Naive thymus-derived CD4-positive, alpha-beta T cell (primary cell): ENCODE measurements at regions of chr5 and their contacts with region 1.

Region 1: DNA sequence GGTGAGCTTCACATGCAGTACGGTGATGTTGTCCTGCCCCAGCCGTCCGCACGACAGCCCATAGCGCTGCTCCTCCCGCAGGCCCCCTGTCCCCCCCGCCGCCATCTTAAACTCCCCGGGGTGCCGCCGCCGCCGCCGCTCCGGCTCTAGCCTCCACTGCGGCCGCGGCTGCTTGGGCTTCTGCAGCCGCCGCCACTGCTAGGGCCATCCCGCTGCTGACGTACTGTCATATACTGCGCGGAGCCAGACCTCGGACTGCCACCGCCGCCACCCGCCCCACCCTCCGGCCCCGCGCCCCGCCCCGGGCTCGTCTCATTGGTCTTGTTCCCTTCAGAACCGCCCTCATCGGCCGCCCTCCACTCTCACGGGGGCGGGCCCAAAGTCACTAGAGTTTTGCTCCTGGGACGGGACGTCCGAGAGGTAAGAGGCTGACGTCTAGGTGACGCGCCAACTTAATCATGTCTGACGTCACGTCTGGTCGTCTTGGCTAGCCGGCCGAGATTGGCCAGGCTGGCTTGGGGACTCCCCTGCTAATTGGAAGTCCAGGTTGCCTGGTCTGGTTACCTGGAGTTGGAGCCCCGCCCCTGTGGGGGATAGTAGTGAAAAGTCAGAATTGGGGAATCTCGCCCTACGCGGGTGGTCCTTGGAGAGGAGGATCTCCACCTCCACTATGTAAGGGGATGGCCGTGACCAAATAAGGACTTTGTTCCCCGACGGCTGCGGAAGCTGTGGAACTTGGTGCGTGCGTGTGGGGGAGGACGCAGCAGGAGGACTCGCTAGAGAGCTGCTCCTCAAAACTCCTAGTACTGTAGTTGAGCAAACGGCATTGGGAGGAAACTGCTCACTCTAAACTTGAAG is at the start of gene ELL2:
- DNase-seq: peak; percentile 85 to 98 (median 90)
- ATAC-seq: peak; percentile 93
- H3K4me3 ChIP-seq: peak within 1 kb of the TSS; percentile 73
- H3K4me3 Mint-ChIP-seq: peak within 1 kb of the TSS; percentile 94 to 99 (median 96)
- H3K27ac ChIP-seq: peak within 1 kb of the TSS; percentile 90
- H3K27ac Mint-ChIP-seq: peak within 1 kb of the TSS; percentile 87 to 99 (median 98)
- H3K4me1 ChIP-seq: peaks cover 12 to 13% of the 10 kb centered on the region in 2 donors
- H3K4me1 Mint-ChIP-seq: peaks cover 30 to 43% (median 34%) of the 10 kb centered on the region in 7 donors
- H3K27me3 ChIP-seq: no peaks in the 10 kb centered on the region
- H3K27me3 Mint-ChIP-seq: peaks cover 0 to 3% (median 0%) of the 10 kb centered on the region in 5 donors
- total RNA-seq, gene ELL2: 12.6 to 65.8 (median 41.3) TPM

Region 2: DNA sequence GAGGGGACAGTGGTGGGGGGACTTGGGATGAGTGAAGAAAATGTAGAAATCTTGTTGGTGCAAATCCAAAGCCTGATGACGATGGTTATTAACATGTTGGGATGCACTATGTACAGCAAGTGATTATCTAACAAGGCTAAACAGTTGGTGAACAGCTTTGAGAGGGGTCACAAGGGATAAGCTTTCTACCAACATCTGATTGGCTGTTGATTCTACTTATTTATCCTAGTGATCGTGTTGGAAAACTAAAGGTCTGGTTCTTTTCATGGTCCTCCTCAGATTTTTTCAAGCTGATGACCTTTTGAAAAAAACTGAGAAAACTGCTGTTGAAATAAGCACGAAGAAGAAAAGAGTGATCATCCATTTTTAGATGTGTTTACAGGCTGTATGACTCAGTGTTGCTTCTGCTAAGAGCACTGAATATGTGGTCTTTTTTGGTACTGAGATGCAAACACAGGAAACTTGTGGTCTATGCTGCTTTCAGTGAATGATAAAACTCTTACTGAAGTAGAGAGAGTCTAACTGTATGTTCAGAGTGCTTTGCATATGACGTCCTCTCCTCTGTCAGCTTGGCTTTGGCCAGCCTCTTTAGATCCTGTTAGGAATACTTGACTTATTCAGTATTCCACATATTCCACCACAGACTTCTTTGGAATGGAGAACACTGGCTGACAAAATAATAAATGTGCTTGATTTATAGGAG is 1168.6 kb before region 1 on chr5:
- CTCF ChIA-PET with region 1: no interaction called
- POLR2A ChIA-PET with region 1: no interaction called
- intact Hi-C with region 1: loop called in 1 of 2 experiments (anchors 2 kb)
- DNase-seq: peak in 6 of 9 donors; percentile 14 to 53 (median 30)
- ATAC-seq: peak; percentile 95
- H3K4me3 ChIP-seq: no peak overlapping the region
- H3K4me3 Mint-ChIP-seq: peak overlapping the region in 8 of 10 donors; percentile 17 to 74 (median 37)
- H3K27ac ChIP-seq: peak overlapping the region; percentile 24
- H3K27ac Mint-ChIP-seq: peak overlapping the region; percentile 22 to 97 (median 80)
- H3K4me1 ChIP-seq: peaks cover 16 to 29% of the 10 kb centered on the region in 2 donors
- H3K4me1 Mint-ChIP-seq: peaks cover 13 to 49% (median 35%) of the 10 kb centered on the region in 7 donors
- H3K27me3 ChIP-seq: no peaks in the 10 kb centered on the region
- H3K27me3 Mint-ChIP-seq: peaks cover 0 to 10% (median 0%) of the 10 kb centered on the region in 5 donors

Region 3: GRCh38 chr5:95760273-95761191 is 201.3 kb before region 1 on chr5:
- CTCF ChIA-PET with region 1: no interaction called
- POLR2A ChIA-PET with region 1: no interaction called
- intact Hi-C with region 1: loop called in 1 of 2 experiments (anchors 5 kb)
- DNase-seq: peak in 7 of 9 donors; percentile 3 to 45 (median 32)
- ATAC-seq: peak; percentile 83
- H3K4me3 ChIP-seq: peak overlapping the region; percentile 50
- H3K4me3 Mint-ChIP-seq: peak overlapping the region; percentile 70 to 86 (median 82)
- H3K27ac ChIP-seq: peak overlapping the region; percentile 58
- H3K27ac Mint-ChIP-seq: peak overlapping the region; percentile 75 to 92 (median 90)
- H3K4me1 ChIP-seq: peaks cover 0 to 27% of the 10 kb centered on the region in 2 donors
- H3K4me1 Mint-ChIP-seq: peaks cover 11 to 46% (median 32%) of the 10 kb centered on the region in 7 donors
- H3K27me3 ChIP-seq: no peaks in the 10 kb centered on the region
- H3K27me3 Mint-ChIP-seq: peaks cover 0 to 44% (median 0%) of the 10 kb centered on the region in 5 donors

Region 4: GRCh38 chr5:95892780-95893354 is 69.0 kb before region 1 on chr5:
- CTCF ChIA-PET with region 1: no interaction called
- POLR2A ChIA-PET with region 1: no interaction called
- intact Hi-C with region 1: loop called in 1 of 2 experiments (anchors 2 kb)
- DNase-seq: peak in 1 of 9 donors; percentile 2
- ATAC-seq: peak; percentile 65
- H3K4me3 ChIP-seq: no peak overlapping the region
- H3K4me3 Mint-ChIP-seq: no peak overlapping the region
- H3K27ac ChIP-seq: no peak overlapping the region
- H3K27ac Mint-ChIP-seq: no peak overlapping the region
- H3K4me1 ChIP-seq: no peaks in the 10 kb centered on the region
- H3K4me1 Mint-ChIP-seq: peaks cover 0 to 14% (median 0%) of the 10 kb centered on the region in 7 donors
- H3K27me3 ChIP-seq: no peaks in the 10 kb centered on the region
- H3K27me3 Mint-ChIP-seq: no peaks in the 10 kb centered on the region

Region 5: DNA sequence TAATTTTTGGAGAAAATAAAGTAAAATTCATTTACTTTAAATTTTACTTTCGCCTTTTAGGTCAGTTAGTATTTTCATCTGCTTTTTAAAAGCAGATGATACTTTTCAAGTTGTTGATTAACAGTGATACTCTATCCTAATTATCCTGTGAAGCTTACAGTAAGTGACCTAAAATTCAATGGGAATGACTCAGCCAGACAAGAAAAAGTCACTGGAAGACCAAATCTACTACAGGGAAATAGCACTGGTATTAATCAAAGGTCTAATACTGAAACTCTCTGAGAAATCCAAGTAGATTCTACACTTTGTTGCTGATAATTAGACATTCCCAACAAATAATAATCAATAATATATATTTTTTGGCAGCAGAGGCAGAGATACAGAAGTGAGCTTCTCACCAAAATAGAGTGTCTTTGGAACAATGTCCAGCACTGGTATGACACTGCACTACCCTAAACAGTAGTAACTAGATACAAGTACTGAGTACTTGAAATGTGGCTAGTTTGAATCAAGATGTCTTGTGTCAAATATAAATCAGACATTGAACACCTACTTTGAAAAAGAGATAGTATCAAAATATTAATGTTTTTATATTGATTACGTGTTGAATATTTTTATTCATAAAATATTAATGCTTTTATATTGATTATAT is 22.6 kb after region 1 on chr5:
- CTCF ChIA-PET with region 1: no interaction called
- POLR2A ChIA-PET with region 1: no interaction called
- intact Hi-C with region 1: no loop called
- DNase-seq: no peak
- ATAC-seq: no peak
- H3K4me3 ChIP-seq: no peak overlapping the region
- H3K4me3 Mint-ChIP-seq: no peak overlapping the region
- H3K27ac ChIP-seq: no peak overlapping the region
- H3K27ac Mint-ChIP-seq: no peak overlapping the region
- H3K4me1 ChIP-seq: no peaks in the 10 kb centered on the region
- H3K4me1 Mint-ChIP-seq: no peaks in the 10 kb centered on the region
- H3K27me3 ChIP-seq: no peaks in the 10 kb centered on the region
- H3K27me3 Mint-ChIP-seq: peaks cover 0 to under 1% (median 0%) of the 10 kb centered on the region in 5 donors

Region 6: GRCh38 chr5:96344678-96345577 is 383.1 kb after region 1 on chr5:
- CTCF ChIA-PET with region 1: no interaction called
- POLR2A ChIA-PET with region 1: no interaction called
- intact Hi-C with region 1: loop called in 1 of 2 experiments (anchors 2 kb)
- DNase-seq: peak in 7 of 9 donors; percentile 33 to 70 (median 59)
- ATAC-seq: peak; percentile 91
- H3K4me3 ChIP-seq: no peak overlapping the region
- H3K4me3 Mint-ChIP-seq: peak overlapping the region; percentile 1 to 72 (median 48)
- H3K27ac ChIP-seq: no peak overlapping the region
- H3K27ac Mint-ChIP-seq: peak overlapping the region in 6 of 9 donors; percentile 3 to 53 (median 10)
- H3K4me1 ChIP-seq: peaks cover 6 to 7% of the 10 kb centered on the region in 2 donors
- H3K4me1 Mint-ChIP-seq: peaks cover 5 to 21% (median 18%) of the 10 kb centered on the region in 7 donors
- H3K27me3 ChIP-seq: no peaks in the 10 kb centered on the region
- H3K27me3 Mint-ChIP-seq: peaks cover 0 to 38% (median 8%) of the 10 kb centered on the region in 5 donors

Region 7: DNA sequence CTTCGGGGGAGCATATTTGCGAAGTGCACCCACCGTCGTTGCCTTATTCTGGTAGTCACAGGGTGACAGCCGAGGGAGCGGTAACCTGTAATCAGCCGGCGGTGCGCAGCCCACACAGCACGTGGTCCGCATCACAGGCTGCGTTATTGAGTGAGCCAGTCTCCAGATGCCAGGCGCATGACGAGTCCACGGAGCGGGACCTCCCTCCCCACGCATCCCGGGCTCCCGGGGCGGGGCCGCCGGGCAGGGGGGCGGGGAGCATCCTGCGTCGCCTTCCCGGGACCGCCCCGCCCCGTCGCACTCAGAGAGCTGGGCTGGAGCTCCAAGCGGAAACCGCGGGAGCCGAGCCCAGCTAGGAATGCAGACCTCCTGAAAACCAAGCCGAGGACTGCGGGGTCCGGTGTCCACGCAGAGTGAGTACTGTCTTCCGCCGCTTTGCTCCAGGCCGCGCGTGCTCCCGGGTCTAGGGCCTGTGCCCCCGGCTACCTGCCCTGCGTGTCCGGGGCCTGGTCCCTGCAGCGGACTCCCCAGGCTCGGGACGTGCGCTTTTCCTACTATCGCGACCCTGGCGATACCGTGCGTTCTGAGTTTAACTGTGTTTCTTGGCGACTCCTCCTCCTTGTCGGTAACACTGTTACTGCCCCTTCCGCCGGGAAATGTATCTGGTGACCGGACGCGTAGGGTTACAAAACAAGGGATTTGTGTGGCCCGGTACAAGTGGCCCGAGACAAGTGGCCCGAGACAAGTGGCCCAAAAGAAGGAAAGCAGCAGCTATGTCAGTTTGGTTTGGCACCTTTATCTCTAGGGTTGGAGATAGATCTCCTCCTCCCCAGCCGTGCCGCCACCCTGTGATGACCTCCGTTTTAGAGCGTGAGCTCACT is 740.9 kb after region 1 on chr5:
- CTCF ChIA-PET with region 1: no interaction called
- POLR2A ChIA-PET with region 1: no interaction called
- intact Hi-C with region 1: loop called in 1 of 2 experiments (anchors 5 kb)
- DNase-seq: peak; percentile 60 to 88 (median 77)
- ATAC-seq: peak; percentile 91
- H3K4me3 ChIP-seq: peak overlapping the region; percentile 75
- H3K4me3 Mint-ChIP-seq: peak overlapping the region; percentile 87 to 98 (median 94)
- H3K27ac ChIP-seq: peak overlapping the region; percentile 82
- H3K27ac Mint-ChIP-seq: peak overlapping the region; percentile 90 to 98 (median 96)
- H3K4me1 ChIP-seq: peaks cover 7 to 20% of the 10 kb centered on the region in 2 donors
- H3K4me1 Mint-ChIP-seq: peaks cover 18 to 56% (median 29%) of the 10 kb centered on the region in 7 donors
- H3K27me3 ChIP-seq: no peaks in the 10 kb centered on the region
- H3K27me3 Mint-ChIP-seq: no peaks in the 10 kb centered on the region